AG04449 (cell line): ENCODE measurements at regions of chr2 and their contacts with region 1.

Region 1: DNA sequence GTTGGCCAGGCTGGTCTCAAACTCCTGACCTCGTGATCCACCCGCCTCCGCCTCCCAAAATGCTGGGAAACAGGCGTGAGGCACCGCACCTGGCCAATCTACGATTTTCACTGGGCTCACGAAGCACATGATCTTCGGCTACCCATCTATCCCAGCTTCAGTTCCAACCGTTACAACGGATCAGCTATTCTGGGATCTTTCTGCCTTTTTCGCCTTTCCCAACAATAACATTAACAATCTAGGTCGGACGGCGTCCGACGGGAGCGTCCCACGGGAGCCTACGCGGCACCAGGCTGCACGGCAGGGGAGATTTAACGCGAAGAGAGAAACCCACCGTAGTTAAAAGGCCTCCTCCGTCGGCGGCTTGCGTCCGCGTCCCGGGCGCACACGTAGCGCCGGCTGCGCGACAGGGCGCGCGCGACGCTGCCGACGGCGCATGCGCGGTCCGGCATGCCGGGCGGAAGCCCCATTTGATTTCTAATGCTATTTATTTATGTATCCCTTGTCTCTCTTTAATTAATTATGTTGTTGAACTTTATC is at the start of gene MSL3B:
- DNase-seq: no peak
- H3K4me3 ChIP-seq: peak within 1 kb of the TSS; percentile 71
- CTCF ChIP-seq: no peak

Region 2: DNA sequence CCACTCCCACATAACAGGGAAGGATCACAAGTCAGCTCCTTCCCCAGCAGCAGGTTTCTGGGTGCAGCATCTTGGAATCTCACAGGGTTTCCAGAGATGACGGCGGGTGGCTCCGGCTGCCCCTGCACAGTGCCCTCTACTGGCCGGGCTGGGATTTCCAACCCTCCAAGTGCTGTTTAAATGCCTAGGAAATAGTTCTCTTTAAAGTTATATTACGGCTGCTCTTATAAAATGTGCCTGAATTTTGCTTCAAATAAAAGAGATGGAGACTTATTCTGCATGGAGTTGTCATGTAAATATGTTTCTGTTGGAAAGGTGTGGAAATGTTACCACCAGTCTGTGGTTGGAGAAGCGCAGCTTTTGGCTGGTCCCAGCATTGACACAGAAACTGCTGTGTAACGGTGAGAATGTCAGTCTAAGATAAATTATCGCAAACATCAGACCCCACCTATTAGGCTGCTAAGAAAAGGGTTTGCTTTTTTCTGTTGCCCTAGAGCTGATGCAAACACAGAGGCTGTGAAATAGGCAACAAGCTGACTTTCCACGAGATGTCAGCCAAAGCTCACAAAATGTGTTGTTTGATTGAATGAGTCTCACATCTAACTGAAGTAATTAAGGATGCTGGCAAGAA is 10.4 kb before region 1 on chr2:
- CTCF ChIA-PET with region 1: interaction called, 16 read pairs
- POLR2A ChIA-PET with region 1: no interaction called
- DNase-seq: no peak
- H3K4me3 ChIP-seq: no peak overlapping the region
- CTCF ChIP-seq: peak; percentile 39

Region 3: GRCh38 chr2:233928594-233929351 is 60.7 kb after region 1 on chr2:
- CTCF ChIA-PET with region 1: no interaction called
- POLR2A ChIA-PET with region 1: no interaction called
- DNase-seq: no peak
- H3K4me3 ChIP-seq: no peak overlapping the region
- CTCF ChIP-seq: peak; percentile 36